ENCODE measurements at regions of chr2 and their contacts with region 1.

Region 1: DNA sequence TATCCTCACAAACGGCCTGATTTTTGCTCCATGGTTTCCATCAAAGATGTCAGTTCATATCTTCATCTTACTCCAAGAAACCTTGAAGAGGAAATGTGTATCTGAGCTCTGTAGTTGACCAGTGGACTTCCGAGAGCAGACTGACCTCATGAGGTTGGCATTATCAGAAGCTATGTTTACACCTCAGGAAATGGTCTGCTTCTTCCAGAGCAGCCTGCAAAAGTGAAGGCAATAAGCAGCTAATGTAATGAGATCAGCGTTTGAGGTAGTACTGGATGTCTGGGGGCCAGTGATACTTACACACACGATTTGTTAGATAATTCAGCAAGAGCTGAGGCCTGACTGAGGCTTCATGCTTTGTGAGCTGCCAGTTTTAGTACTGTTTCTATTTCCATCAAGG is 189.7 kb downstream of the LRRTM1 start:
- DNase-seq: no peak
- ATAC-seq: no peak
- H3K4me3 ChIP-seq: no peak overlapping the region
- H3K27ac ChIP-seq: no peak overlapping the region
- H3K4me1 ChIP-seq: no peaks in the 10 kb centered on the region
- H3K27me3 ChIP-seq: no peaks in the 10 kb centered on the region
- CTCF ChIP-seq: no peak

Region 2: DNA sequence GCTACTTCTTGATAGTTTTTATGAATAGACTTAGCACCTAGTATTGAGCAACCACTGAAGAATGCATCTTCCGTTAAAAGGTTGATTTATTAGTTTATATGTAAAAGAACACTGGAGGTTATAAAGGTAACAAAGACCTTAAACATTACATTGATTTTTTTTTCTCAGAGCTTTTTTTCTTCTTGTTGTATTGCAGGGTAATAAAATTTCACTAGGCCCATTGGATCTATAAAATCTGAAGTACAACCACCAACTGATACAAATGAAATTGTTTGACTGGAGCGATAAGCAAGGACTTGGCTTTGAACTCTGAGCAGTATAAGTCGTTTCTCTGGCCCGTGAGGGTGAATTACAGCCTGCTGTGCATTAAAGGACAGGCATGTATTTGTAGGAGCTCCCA is 154.3 kb before region 1 on chr2:
- CTCF ChIA-PET with region 1: no interaction called
- POLR2A ChIA-PET with region 1: no interaction called
- intact Hi-C with region 1: no loop called
- DNase-seq: no peak
- ATAC-seq: no peak
- H3K4me3 ChIP-seq: no peak overlapping the region
- H3K27ac ChIP-seq: no peak overlapping the region
- H3K4me1 ChIP-seq: no peaks in the 10 kb centered on the region
- H3K27me3 ChIP-seq: no peaks in the 10 kb centered on the region
- CTCF ChIP-seq: no peak

Region 3: DNA sequence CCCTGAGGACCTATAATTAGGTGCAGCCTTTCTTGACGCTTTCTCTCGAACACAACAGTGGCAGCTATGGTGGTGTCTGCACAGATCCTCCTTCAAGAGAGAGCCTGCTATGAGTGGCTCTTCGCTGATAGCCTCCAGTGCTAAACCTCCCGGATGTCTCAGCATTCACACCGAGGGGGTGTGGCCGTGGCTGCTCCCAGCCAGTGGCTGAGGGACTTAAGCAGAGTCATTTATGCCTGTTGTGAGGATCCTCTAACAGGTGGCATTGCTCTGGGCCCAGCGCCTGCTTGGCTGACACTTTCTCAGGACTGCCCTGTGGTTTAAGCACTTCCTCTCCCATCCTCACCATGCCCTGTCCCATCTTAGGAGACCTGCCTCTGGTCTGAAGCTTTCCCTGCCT is 781.8 kb after region 1 on chr2:
- CTCF ChIA-PET with region 1: no interaction called
- POLR2A ChIA-PET with region 1: interaction called, 20 read pairs
- intact Hi-C with region 1: no loop called
- DNase-seq: no peak
- ATAC-seq: no peak
- H3K4me3 ChIP-seq: no peak overlapping the region
- H3K27ac ChIP-seq: no peak overlapping the region
- H3K4me1 ChIP-seq: no peaks in the 10 kb centered on the region
- H3K27me3 ChIP-seq: no peaks in the 10 kb centered on the region
- CTCF ChIP-seq: no peak